ENCODE measurements at regions of chr1 and their contacts with region 1.

Region 1: GRCh38 chr1:182861994-182862393 is 22.8 kb downstream of the DHX9 start:
- DNase-seq: no peak
- ATAC-seq: peak; percentile 83
- H3K4me3 Mint-ChIP-seq: no peak overlapping the region
- H3K27ac Mint-ChIP-seq: peak overlapping the region; percentile 77
- H3K4me1 Mint-ChIP-seq: peaks cover 50% of the 10 kb centered on the region
- H3K27me3 Mint-ChIP-seq: no peaks in the 10 kb centered on the region

Region 2: DNA sequence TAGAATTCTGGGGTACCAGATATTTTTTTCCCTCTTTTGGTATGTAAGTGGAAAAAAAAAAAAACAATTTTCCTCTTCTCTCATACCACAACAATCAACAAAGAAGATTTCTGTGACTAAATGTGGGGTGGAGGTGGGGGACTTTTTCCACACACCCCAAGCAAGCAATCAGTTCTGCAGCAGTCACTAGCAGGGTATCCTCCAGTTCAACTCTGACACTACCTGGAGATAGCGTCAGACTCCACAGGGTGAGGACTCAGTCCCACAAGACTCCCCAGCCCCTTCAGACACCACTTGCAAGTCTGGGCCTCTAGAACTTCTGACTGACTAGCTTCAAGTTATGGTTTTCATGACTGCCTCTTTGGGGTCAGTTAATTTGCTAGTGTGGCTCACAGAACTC is 16.6 kb before region 1 on chr1:
- CTCF ChIA-PET with region 1: interaction called, 4 read pairs
- POLR2A ChIA-PET with region 1: interaction called, 3 read pairs
- intact Hi-C with region 1: loop called (anchors 2 kb)
- DNase-seq: peak; percentile 41
- ATAC-seq: peak; percentile 71
- H3K4me3 Mint-ChIP-seq: peak overlapping the region; percentile 21
- H3K27ac Mint-ChIP-seq: peak overlapping the region; percentile 59
- H3K4me1 Mint-ChIP-seq: peaks cover 87% of the 10 kb centered on the region
- H3K27me3 Mint-ChIP-seq: no peaks in the 10 kb centered on the region

Region 3: GRCh38 chr1:182851825-182852224 is 10.2 kb before region 1 on chr1:
- CTCF ChIA-PET with region 1: interaction called, 7 read pairs
- POLR2A ChIA-PET with region 1: no interaction called
- intact Hi-C with region 1: loop called in 1 of 2 experiments (anchors 1 kb)
- DNase-seq: no peak
- ATAC-seq: peak; percentile 65
- H3K4me3 Mint-ChIP-seq: no peak overlapping the region
- H3K27ac Mint-ChIP-seq: peak overlapping the region; percentile 47
- H3K4me1 Mint-ChIP-seq: peaks cover 43% of the 10 kb centered on the region
- H3K27me3 Mint-ChIP-seq: no peaks in the 10 kb centered on the region

Measured in activated CD4-positive, alpha-beta T cell treated with anti-CD3 and anti-CD28 coated beads for 36 hours (primary cell).